H1 (cell line): ENCODE measurements at regions of chr13 and their contacts with region 1.

Region 1: GRCh38 chr13:44231786-44232516 is 141.7 kb upstream of the SERP2 start:
- DNase-seq: peak; percentile 62 to 80
- H3K4me3 ChIP-seq: no peak overlapping the region
- H3K27ac ChIP-seq: no peak overlapping the region; the same call in 1 of the 2 replicates
- H3K4me1 ChIP-seq: peaks cover 4 to 6% (median 5%) of the 10 kb centered on the region in 4 experiments; a peak in 4 of 7 replicates
- H3K27me3 ChIP-seq: no peaks in the 10 kb centered on the region
- CTCF ChIP-seq: no peak
- EP300 ChIP-seq: no peak
- POLR2A ChIP-seq: no peak; a peak in 1 of 3 replicates
- RAD21 ChIP-seq: peak in 1 of 2 experiments; percentile 18; a peak in 1 of 4 replicates

Region 2: GRCh38 chr13:44108331-44108858 is 123.6 kb before region 1 on chr13:
- CTCF ChIA-PET with region 1: no interaction called
- POLR2A ChIA-PET with region 1: no interaction called
- DNase-seq: no peak
- H3K4me3 ChIP-seq: no peak overlapping the region
- H3K27ac ChIP-seq: no peak overlapping the region
- H3K4me1 ChIP-seq: peaks cover 0 to 6% (median 0%) of the 10 kb centered on the region in 4 experiments; a peak in 2 of 7 replicates
- H3K27me3 ChIP-seq: no peaks in the 10 kb centered on the region
- CTCF ChIP-seq: no peak
- EP300 ChIP-seq: no peak
- POLR2A ChIP-seq: no peak
- RAD21 ChIP-seq: no peak

Region 3: GRCh38 chr13:44243198-44243857 is 11.4 kb after region 1 on chr13:
- CTCF ChIA-PET with region 1: interaction called, 18 read pairs
- POLR2A ChIA-PET with region 1: interaction called, 3 read pairs
- DNase-seq: peak; percentile 60 to 64
- H3K4me3 ChIP-seq: no peak overlapping the region
- H3K27ac ChIP-seq: no peak overlapping the region
- H3K4me1 ChIP-seq: no peaks in the 10 kb centered on the region
- H3K27me3 ChIP-seq: no peaks in the 10 kb centered on the region
- CTCF ChIP-seq: peak; percentile 78 to 92 (median 78)
- EP300 ChIP-seq: no peak
- POLR2A ChIP-seq: no peak
- RAD21 ChIP-seq: peak; percentile 91 to 96